ENCODE measurements at regions of chr16 and their contacts with region 1.

Region 1: GRCh38 chr16:17591655-17592405 is 121.1 kb upstream of the XYLT1 start:
- DNase-seq: no peak
- H3K4me3 ChIP-seq: no peak overlapping the region
- H3K27ac ChIP-seq: no peak overlapping the region
- H3K4me1 ChIP-seq: no peaks in the 10 kb centered on the region
- H3K27me3 ChIP-seq: no peaks in the 10 kb centered on the region
- CTCF ChIP-seq: no peak; a peak in 1 of 4 replicates
- EP300 ChIP-seq: no peak
- POLR2A ChIP-seq: no peak
- RAD21 ChIP-seq: no peak

Region 2: GRCh38 chr16:17578921-17579874 is 12.6 kb before region 1 on chr16:
- CTCF ChIA-PET with region 1: interaction called, 17 read pairs
- POLR2A ChIA-PET with region 1: no interaction called
- DNase-seq: peak; percentile 74 to 90
- H3K4me3 ChIP-seq: no peak overlapping the region
- H3K27ac ChIP-seq: no peak overlapping the region
- H3K4me1 ChIP-seq: 0 out of 7 replicates have a peak, but pooled peaks cover 0 to 4% (median 0%) of the 10 kb centered on the region in 4 experiments
- H3K27me3 ChIP-seq: no peaks in the 10 kb centered on the region
- CTCF ChIP-seq: peak; percentile 67 to 95 (median 84)
- EP300 ChIP-seq: no peak
- POLR2A ChIP-seq: no peak
- RAD21 ChIP-seq: peak; percentile 76 to 84